CD8-positive, alpha-beta T cell (primary cell): ENCODE measurements at regions of chr17 and their contacts with region 1.

Region 1: GRCh38 chr17:74379495-74380085 is 12.3 kb downstream of the GPR142 start:
- DNase-seq: peak; percentile 88 to 97 (median 90)
- ATAC-seq: peak; percentile 93
- H3K4me3 ChIP-seq: peak overlapping the region in 1 of 2 experiments; percentile 32
- H3K4me3 Mint-ChIP-seq: no peak overlapping the region
- H3K27ac ChIP-seq: peak overlapping the region in 1 of 2 experiments; percentile 37
- H3K27ac Mint-ChIP-seq: no peak overlapping the region
- H3K4me1 ChIP-seq: peaks cover 10% of the 10 kb centered on the region
- H3K4me1 Mint-ChIP-seq: peaks cover 6% of the 10 kb centered on the region
- H3K27me3 ChIP-seq: no peaks in the 10 kb centered on the region
- H3K27me3 Mint-ChIP-seq: peaks cover 3% of the 10 kb centered on the region
- CTCF ChIP-seq: peak; percentile 81

Region 2: GRCh38 chr17:74394977-74395376 is 15.4 kb after region 1 on chr17:
- CTCF ChIA-PET with region 1: interaction called, 37 read pairs
- POLR2A ChIA-PET with region 1: no interaction called
- intact Hi-C with region 1: no loop called
- DNase-seq: no peak
- ATAC-seq: no peak
- H3K4me3 ChIP-seq: no peak overlapping the region
- H3K4me3 Mint-ChIP-seq: no peak overlapping the region
- H3K27ac ChIP-seq: no peak overlapping the region
- H3K27ac Mint-ChIP-seq: no peak overlapping the region
- H3K4me1 ChIP-seq: no peaks in the 10 kb centered on the region
- H3K4me1 Mint-ChIP-seq: no peaks in the 10 kb centered on the region
- H3K27me3 ChIP-seq: no peaks in the 10 kb centered on the region
- H3K27me3 Mint-ChIP-seq: no peaks in the 10 kb centered on the region
- CTCF ChIP-seq: no peak

Region 3: GRCh38 chr17:74493381-74493833 is 113.8 kb after region 1 on chr17:
- CTCF ChIA-PET with region 1: interaction called, 116 read pairs
- POLR2A ChIA-PET with region 1: no interaction called
- intact Hi-C with region 1: loop called (anchors 1 kb)
- DNase-seq: peak; percentile 51 to 82 (median 73)
- ATAC-seq: peak; percentile 83
- H3K4me3 ChIP-seq: no peak overlapping the region
- H3K4me3 Mint-ChIP-seq: no peak overlapping the region
- H3K27ac ChIP-seq: no peak overlapping the region
- H3K27ac Mint-ChIP-seq: no peak overlapping the region
- H3K4me1 ChIP-seq: no peaks in the 10 kb centered on the region
- H3K4me1 Mint-ChIP-seq: peaks cover 3% of the 10 kb centered on the region
- H3K27me3 ChIP-seq: no peaks in the 10 kb centered on the region
- H3K27me3 Mint-ChIP-seq: no peaks in the 10 kb centered on the region
- CTCF ChIP-seq: peak; percentile 93

Region 4: GRCh38 chr17:74528491-74529199 is 149.1 kb after region 1 on chr17:
- CTCF ChIA-PET with region 1: interaction called, 7 read pairs
- POLR2A ChIA-PET with region 1: no interaction called
- intact Hi-C with region 1: loop called in 1 of 2 experiments (anchors 1 kb)
- DNase-seq: peak in 3 of 9 experiments; percentile 7 to 47 (median 19)
- ATAC-seq: no peak
- H3K4me3 ChIP-seq: no peak overlapping the region
- H3K4me3 Mint-ChIP-seq: no peak overlapping the region
- H3K27ac ChIP-seq: no peak overlapping the region
- H3K27ac Mint-ChIP-seq: no peak overlapping the region
- H3K4me1 ChIP-seq: no peaks in the 10 kb centered on the region
- H3K4me1 Mint-ChIP-seq: peaks cover 8% of the 10 kb centered on the region
- H3K27me3 ChIP-seq: peaks cover 0 to 5% of the 10 kb centered on the region in 2 experiments
- H3K27me3 Mint-ChIP-seq: peaks cover 38% of the 10 kb centered on the region
- CTCF ChIP-seq: no peak

Region 5: GRCh38 chr17:74776044-74776977 is 396.7 kb after region 1 on chr17 and contains the start of gene NAT9:
- CTCF ChIA-PET with region 1: no interaction called
- POLR2A ChIA-PET with region 1: no interaction called
- intact Hi-C with region 1: loop called in 1 of 2 experiments (anchors 10 kb)
- DNase-seq: peak; percentile 97 to 100 (median 99)
- ATAC-seq: peak; percentile 74
- H3K4me3 ChIP-seq: peak within 1 kb of the TSS; percentile 68 to 83
- H3K4me3 Mint-ChIP-seq: peak within 1 kb of the TSS; percentile 99
- H3K27ac ChIP-seq: peak within 1 kb of the TSS; percentile 56 to 76
- H3K27ac Mint-ChIP-seq: peak within 1 kb of the TSS; percentile 97
- H3K4me1 ChIP-seq: peaks cover 47% of the 10 kb centered on the region
- H3K4me1 Mint-ChIP-seq: peaks cover 62% of the 10 kb centered on the region
- H3K27me3 ChIP-seq: no peaks in the 10 kb centered on the region
- H3K27me3 Mint-ChIP-seq: no peaks in the 10 kb centered on the region
- CTCF ChIP-seq: no peak
- total RNA-seq, gene NAT9: 37.9 to 41.1 TPM